ENCODE measurements at regions of chr1 and their contacts with region 1.

Region 1: GRCh38 chr1:201895913-201896807 is 7.5 kb downstream of the SHISA4 start:
- DNase-seq: peak; percentile 85
- ATAC-seq: peak; percentile 87 to 97 (median 93)
- H3K4me3 ChIP-seq: no peak overlapping the region
- H3K27ac ChIP-seq: no peak overlapping the region
- H3K4me1 ChIP-seq: peaks cover 0 to 5% (median 0%) of the 10 kb centered on the region in 4 donors
- H3K27me3 ChIP-seq: no peaks in the 10 kb centered on the region
- CTCF ChIP-seq: peak; percentile 90 to 95 (median 90)
- POLR2A ChIP-seq: no peak

Region 2: GRCh38 chr1:201676197-201676596 is 220.0 kb before region 1 on chr1:
- intact Hi-C with region 1: no loop called
- DNase-seq: no peak
- ATAC-seq: peak; percentile 38 to 62 (median 46)
- H3K4me3 ChIP-seq: no peak overlapping the region
- H3K27ac ChIP-seq: no peak overlapping the region
- H3K4me1 ChIP-seq: no peaks in the 10 kb centered on the region
- H3K27me3 ChIP-seq: no peaks in the 10 kb centered on the region
- CTCF ChIP-seq: no peak
- POLR2A ChIP-seq: no peak

Region 3: GRCh38 chr1:201970334-201971159 is 74.4 kb after region 1 on chr1:
- intact Hi-C with region 1: loop called (anchors 5 to 10 kb)
- DNase-seq: no peak
- ATAC-seq: peak in 1 of 4 donors; percentile 36
- H3K4me3 ChIP-seq: no peak overlapping the region
- H3K27ac ChIP-seq: no peak overlapping the region
- H3K4me1 ChIP-seq: no peaks in the 10 kb centered on the region
- H3K27me3 ChIP-seq: no peaks in the 10 kb centered on the region
- CTCF ChIP-seq: no peak
- POLR2A ChIP-seq: no peak

Region 4: GRCh38 chr1:202144402-202145067 is 248.4 kb after region 1 on chr1 and contains the start of gene ARL8A:
- intact Hi-C with region 1: loop called in 1 of 2 experiments (anchors 10 kb)
- DNase-seq: peak; percentile 82 to 86 (median 85)
- ATAC-seq: peak; percentile 68 to 78 (median 70)
- H3K4me3 ChIP-seq: peak within 1 kb of the TSS; percentile 87 to 99 (median 91)
- H3K27ac ChIP-seq: peak within 1 kb of the TSS; percentile 80 to 95 (median 91)
- H3K4me1 ChIP-seq: peaks cover 0 to 19% (median 6%) of the 10 kb centered on the region in 4 donors
- H3K27me3 ChIP-seq: no peaks in the 10 kb centered on the region
- CTCF ChIP-seq: no peak
- POLR2A ChIP-seq: peak; percentile 86
- total RNA-seq, gene ARL8A: 23.1 to 57.7 (median 36.1) TPM